GM13976 (cell line): ENCODE measurements at regions of chr5 and their contacts with region 1.

Region 1: DNA sequence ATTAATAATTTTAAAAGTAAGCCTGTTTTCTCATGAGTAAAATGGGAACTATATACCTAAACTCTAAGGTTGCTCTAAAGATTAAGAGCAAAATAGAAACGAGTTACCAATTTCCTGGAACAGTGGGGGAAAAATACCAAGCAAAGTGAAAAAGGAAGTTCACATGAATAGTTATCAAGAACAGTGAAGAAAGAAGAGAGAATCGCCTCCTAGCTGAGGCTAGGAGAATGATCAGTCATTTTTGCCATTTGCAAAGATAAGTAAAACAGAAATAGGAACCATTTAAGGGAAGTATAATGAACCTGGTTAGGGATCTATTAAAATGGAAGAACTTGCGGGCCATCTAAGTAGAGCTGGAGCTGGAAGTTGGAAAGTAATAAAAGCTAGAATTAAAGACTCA is 50.7 kb downstream of the P4HA2 start:
- DNase-seq: peak; percentile 59
- CTCF ChIP-seq: peak; percentile 18

Region 2: GRCh38 chr5:131281133-131281867 is 895.7 kb before region 1 on chr5:
- in situ Hi-C with region 1: no loop called
- DNase-seq: peak; percentile 40
- CTCF ChIP-seq: no peak

Region 3: GRCh38 chr5:132064738-132065331 is 112.2 kb before region 1 on chr5:
- in situ Hi-C with region 1: loop called (anchors 5 kb)
- DNase-seq: peak; percentile 87
- CTCF ChIP-seq: peak; percentile 94